Activated B cell treated with CpG ODN at 0.5 μM for 24 hours (primary cell): ENCODE measurements at regions of chr16 and their contacts with region 1.

Region 1: DNA sequence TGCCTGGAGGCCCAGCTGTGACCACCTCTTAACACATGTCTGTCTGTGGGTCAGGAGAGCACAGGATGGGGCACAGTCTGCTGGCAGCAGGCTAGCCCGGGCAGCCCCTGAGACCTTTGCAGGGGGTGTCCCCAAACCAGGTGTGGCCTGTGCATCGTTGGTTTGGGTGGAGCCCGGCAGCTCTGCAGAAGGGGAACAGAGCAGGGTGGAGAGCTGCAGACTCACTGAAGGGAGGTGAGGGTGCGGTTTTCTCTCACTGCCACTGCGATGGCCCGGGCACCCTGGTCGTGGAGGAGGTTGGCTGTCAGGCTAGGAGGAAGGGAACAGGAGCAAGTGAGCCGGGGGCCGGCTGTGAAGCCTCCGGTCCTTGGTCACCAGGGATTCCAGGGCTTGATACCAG is 28.8 kb downstream of the NLRC3 start:
- DNase-seq: peak; percentile 28
- ATAC-seq: peak; percentile 95
- H3K4me3 Mint-ChIP-seq: peak overlapping the region; percentile 9
- H3K27ac Mint-ChIP-seq: peak overlapping the region; percentile 79
- H3K4me1 Mint-ChIP-seq: peaks cover 43% of the 10 kb centered on the region
- H3K27me3 Mint-ChIP-seq: no peaks in the 10 kb centered on the region
- CTCF ChIP-seq: no peak

Region 2: GRCh38 chr16:3276679-3277078 is 271.8 kb before region 1 on chr16:
- CTCF ChIA-PET with region 1: no interaction called
- POLR2A ChIA-PET with region 1: interaction called, 13 read pairs
- intact Hi-C with region 1: no loop called
- DNase-seq: no peak
- ATAC-seq: no peak
- H3K4me3 Mint-ChIP-seq: no peak overlapping the region
- H3K27ac Mint-ChIP-seq: no peak overlapping the region
- H3K4me1 Mint-ChIP-seq: no peaks in the 10 kb centered on the region
- H3K27me3 Mint-ChIP-seq: no peaks in the 10 kb centered on the region
- CTCF ChIP-seq: no peak

Region 3: DNA sequence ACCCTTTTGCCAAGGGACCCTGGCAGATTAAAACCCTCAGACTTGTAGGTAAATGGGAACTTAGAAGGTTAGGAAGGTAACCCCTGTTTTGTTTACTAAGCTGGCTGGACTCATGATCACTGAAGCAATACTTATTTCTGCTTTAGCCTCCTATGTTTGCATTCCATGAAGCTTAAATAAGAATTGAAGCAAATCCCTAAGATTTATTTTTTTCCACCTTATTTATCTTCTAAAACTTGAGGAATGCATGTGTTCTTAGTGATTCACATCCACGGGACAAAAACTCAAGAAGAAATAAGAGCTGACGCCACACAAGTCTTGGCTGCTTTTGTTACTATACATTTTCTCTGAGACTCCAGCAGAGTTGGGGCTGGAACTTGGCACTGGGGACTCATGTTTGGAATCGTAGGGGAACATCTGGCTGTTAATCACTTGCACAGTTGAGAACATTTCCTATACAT is 12.1 kb before region 1 on chr16:
- CTCF ChIA-PET with region 1: no interaction called
- POLR2A ChIA-PET with region 1: no interaction called
- intact Hi-C with region 1: no loop called
- DNase-seq: no peak
- ATAC-seq: no peak
- H3K4me3 Mint-ChIP-seq: no peak overlapping the region
- H3K27ac Mint-ChIP-seq: no peak overlapping the region
- H3K4me1 Mint-ChIP-seq: peaks cover 22% of the 10 kb centered on the region
- H3K27me3 Mint-ChIP-seq: no peaks in the 10 kb centered on the region
- CTCF ChIP-seq: no peak

Region 4: GRCh38 chr16:3587547-3588110 is 39.2 kb after region 1 on chr16:
- CTCF ChIA-PET with region 1: no interaction called
- POLR2A ChIA-PET with region 1: no interaction called
- intact Hi-C with region 1: loop called (anchors 5 kb)
- DNase-seq: no peak
- ATAC-seq: peak; percentile 90
- H3K4me3 Mint-ChIP-seq: no peak overlapping the region
- H3K27ac Mint-ChIP-seq: no peak overlapping the region
- H3K4me1 Mint-ChIP-seq: peaks cover 22% of the 10 kb centered on the region
- H3K27me3 Mint-ChIP-seq: no peaks in the 10 kb centered on the region
- CTCF ChIP-seq: no peak

Region 5: GRCh38 chr16:3690470-3690928 is 142.1 kb after region 1 on chr16:
- CTCF ChIA-PET with region 1: no interaction called
- POLR2A ChIA-PET with region 1: no interaction called
- intact Hi-C with region 1: no loop called
- DNase-seq: peak; percentile 74
- ATAC-seq: peak; percentile 100
- H3K4me3 Mint-ChIP-seq: no peak overlapping the region
- H3K27ac Mint-ChIP-seq: no peak overlapping the region
- H3K4me1 Mint-ChIP-seq: peaks cover 8% of the 10 kb centered on the region
- H3K27me3 Mint-ChIP-seq: no peaks in the 10 kb centered on the region
- CTCF ChIP-seq: peak; percentile 50

Region 6: GRCh38 chr16:3717235-3718018 is 169.0 kb after region 1 on chr16 and contains the start of gene TRAP1:
- CTCF ChIA-PET with region 1: no interaction called
- POLR2A ChIA-PET with region 1: no interaction called
- intact Hi-C with region 1: loop called (anchors 1 kb)
- DNase-seq: peak; percentile 90
- ATAC-seq: peak; percentile 95
- H3K4me3 Mint-ChIP-seq: peak within 1 kb of the TSS; percentile 91
- H3K27ac Mint-ChIP-seq: peak within 1 kb of the TSS; percentile 85
- H3K4me1 Mint-ChIP-seq: peaks cover 20% of the 10 kb centered on the region
- H3K27me3 Mint-ChIP-seq: no peaks in the 10 kb centered on the region
- CTCF ChIP-seq: no peak
- total RNA-seq, gene TRAP1: 78.7 and 82.2 TPM in 2 replicates